ENCODE measurements at regions of chr4 and their contacts with region 1.

Region 1: DNA sequence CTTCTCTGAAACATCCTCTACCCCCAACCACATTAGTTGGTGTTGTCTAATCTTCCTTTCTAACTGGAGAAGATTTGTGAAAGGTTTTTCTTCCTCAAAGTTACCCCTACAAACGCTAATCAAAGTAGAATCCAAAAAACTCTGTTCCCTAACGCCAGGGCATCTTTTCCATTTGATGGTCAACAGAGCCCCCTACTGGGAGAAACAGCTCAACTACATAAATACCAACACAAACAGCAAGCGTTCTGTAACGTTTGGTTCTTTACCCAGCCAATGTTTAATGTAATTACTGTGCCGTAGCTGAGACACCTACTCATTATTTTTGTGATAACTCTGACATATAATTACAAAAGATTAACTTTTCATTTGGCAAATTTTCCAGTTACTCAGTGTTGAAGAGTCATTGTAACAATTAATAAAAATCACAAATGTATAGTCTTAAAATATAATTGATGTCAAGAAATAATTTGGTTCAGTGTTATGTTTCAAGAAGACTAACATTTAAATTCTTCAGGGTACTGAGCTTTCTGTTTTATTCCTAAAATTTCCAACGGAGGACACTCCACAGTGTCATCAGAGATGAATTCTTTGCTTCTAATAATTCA is 94.9 kb upstream of the TBC1D9 start:
- DNase-seq: peak; percentile 69
- H3K4me3 ChIP-seq: no peak overlapping the region
- H3K27ac ChIP-seq: no peak overlapping the region
- H3K4me1 ChIP-seq: no peaks in the 10 kb centered on the region
- H3K27me3 ChIP-seq: peaks cover 2 to 9% of the 10 kb centered on the region in 2 experiments
- CTCF ChIP-seq: peak; percentile 65 to 69
- POLR2A ChIP-seq: no peak

Region 2: DNA sequence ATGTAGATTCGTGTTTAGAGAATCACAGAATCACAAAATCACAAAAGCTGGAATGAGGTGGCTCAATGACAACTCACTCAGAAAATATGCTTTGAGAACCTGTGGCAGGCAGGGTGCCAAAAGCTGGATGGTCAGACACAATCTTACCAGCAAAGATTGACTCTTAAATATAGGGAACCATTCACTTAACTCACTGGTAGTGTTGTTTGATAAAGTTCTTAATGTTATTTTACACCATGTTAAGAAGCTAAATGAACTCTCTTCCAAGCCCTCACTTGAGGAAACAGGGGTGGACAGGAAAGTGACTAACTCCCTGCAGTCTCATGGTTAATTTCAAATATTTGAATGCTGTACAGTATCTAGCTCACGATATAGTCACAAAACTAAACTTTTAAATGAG is 483.4 kb before region 1 on chr4:
- CTCF ChIA-PET with region 1: interaction called, 118 read pairs
- POLR2A ChIA-PET with region 1: no interaction called
- dilution Hi-C with region 1: no loop called
- intact Hi-C with region 1: no loop called
- DNase-seq: peak; percentile 55
- H3K4me3 ChIP-seq: no peak overlapping the region
- H3K27ac ChIP-seq: peak overlapping the region; percentile 30
- H3K4me1 ChIP-seq: peaks cover 11% of the 10 kb centered on the region
- H3K27me3 ChIP-seq: no peaks in the 10 kb centered on the region
- CTCF ChIP-seq: no peak
- POLR2A ChIP-seq: no peak

Region 3: DNA sequence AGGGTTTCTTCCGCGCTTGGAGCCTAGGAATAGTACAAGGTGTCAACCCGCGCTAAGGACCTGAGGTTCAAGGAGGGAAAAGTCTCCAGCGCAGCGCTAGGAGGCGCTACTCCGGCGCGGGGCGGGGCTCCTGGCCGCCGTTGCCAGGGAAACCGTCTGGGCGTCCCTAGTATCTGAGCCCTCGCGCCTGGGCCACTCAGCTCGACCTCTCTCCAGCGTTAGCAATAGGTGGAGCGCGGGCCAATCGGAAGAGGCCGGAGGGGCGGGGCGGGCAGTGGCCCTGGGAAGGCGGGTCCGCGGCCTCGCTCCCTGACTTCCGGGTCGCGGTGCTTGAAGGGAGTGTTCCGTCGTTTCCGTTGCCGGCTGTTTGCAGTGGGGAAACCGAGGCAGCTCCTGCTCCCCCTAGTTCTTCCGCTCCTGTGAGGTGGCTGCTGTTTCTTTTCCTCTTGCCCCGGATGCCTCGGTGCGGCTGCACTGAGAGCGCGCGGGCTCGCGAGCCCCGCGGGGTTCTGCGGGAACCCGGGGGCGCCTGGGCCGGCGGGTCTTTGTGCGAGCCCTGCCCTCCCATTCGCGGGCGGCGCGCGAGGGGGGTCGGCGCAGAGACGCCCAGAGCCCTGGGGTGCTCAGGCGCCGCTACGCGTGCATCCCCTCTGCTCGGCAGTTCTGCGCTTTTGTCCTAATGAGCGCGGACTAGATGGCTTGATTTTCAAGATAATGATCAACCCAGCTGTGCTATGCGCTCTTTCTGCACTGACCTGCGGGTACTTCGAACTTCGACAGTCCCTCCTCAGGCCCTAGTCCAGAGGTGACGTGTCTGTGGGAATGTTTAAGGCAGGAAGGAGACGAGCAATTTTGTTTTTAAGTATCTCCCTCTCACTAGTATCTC is 327.0 kb before region 1 on chr4 and contains the start of gene ELMOD2:
- CTCF ChIA-PET with region 1: interaction called, 11 read pairs
- POLR2A ChIA-PET with region 1: no interaction called
- dilution Hi-C with region 1: no loop called
- intact Hi-C with region 1: loop called (anchors 1 kb)
- DNase-seq: peak; percentile 97
- H3K4me3 ChIP-seq: peak within 1 kb of the TSS; percentile 38 to 87 (median 83)
- H3K27ac ChIP-seq: peak within 1 kb of the TSS; percentile 21
- H3K4me1 ChIP-seq: peaks cover 14% of the 10 kb centered on the region
- H3K27me3 ChIP-seq: peaks cover 0 to 2% of the 10 kb centered on the region in 2 experiments
- CTCF ChIP-seq: peak; percentile 97 to 99
- POLR2A ChIP-seq: peak; percentile 80
- total RNA-seq, gene ELMOD2: 20.5 and 23.6 TPM in 2 replicates

Region 4: DNA sequence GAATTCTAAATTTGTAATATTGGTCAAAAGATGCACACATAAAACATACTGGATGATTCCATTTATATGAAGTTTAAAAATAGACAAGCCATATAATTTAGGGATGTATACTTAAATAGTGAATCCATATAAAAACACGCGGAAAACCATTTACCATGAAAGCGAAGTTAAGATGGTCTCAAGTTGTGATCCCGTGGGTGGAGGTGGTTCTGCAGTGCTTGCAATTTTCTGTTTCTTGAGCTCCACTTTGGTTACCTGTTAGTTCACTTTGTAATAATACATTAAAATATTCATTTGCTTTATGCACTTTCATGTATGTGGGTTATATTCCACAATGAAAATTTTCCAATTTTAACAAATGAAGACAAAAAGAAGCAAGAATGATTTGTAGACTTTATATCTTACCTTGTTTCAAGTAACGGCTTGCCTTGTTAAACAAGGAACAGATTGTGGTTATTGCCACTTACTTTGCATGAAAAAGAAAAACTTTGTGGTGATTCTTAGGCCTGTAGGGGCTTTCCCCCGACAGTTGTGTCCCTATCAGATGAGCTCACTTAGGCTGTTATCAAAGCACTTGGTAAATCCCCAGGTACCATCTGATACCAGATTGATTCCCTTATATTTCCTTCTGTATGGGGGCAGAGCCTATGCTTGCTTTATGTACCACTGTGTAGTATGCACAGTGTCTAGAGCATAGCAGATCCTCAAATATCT is 294.6 kb before region 1 on chr4:
- CTCF ChIA-PET with region 1: no interaction called
- POLR2A ChIA-PET with region 1: no interaction called
- dilution Hi-C with region 1: no loop called
- intact Hi-C with region 1: no loop called
- DNase-seq: no peak
- H3K4me3 ChIP-seq: no peak overlapping the region
- H3K27ac ChIP-seq: no peak overlapping the region
- H3K4me1 ChIP-seq: no peaks in the 10 kb centered on the region
- H3K27me3 ChIP-seq: peaks cover 4 to 5% of the 10 kb centered on the region in 2 experiments
- CTCF ChIP-seq: no peak
- POLR2A ChIP-seq: no peak

Region 5: DNA sequence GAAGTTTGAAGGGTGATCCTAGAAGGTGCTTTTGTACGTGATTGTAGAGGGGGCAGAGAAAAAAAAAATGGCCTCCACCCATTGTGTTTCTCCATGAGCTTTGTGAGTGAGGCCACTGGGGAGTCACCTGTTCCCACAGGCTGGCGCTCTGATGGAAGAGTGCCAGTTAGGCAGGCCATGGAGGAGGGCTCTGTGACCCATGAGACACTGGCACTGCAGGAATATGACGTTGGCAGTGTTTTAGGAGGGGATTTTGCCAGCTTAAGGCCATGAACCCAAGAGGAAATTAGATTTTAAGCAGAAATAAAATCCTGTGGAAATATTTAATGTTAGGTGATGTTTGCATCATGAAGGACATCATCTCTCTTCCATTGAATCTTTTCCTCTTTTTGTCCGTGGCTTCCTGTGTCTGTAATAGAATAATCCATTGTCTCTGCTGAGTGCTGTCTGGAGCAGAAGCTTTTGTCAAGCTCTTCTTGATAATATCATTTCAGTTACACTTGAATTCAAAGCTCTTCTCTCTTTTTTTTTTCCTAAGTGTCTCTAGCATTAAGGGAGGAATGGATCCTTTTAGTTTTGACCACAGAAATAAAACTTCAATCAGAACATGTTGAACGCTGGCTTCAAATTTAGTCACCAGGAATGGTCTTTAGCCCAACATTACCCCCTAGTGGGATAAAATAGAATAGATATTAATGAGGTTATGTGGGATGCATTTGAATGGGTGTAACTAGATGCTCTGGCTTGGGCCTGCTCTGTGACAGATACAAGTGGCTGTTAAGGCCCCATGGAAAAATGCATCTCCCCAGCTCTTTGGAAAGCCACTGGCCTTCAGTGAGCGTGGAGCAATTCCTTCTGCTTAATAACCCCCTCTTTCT is 241.3 kb before region 1 on chr4:
- CTCF ChIA-PET with region 1: interaction called, 22 read pairs
- POLR2A ChIA-PET with region 1: no interaction called
- dilution Hi-C with region 1: no loop called
- intact Hi-C with region 1: loop called (anchors 1 kb)
- DNase-seq: peak; percentile 75
- H3K4me3 ChIP-seq: no peak overlapping the region
- H3K27ac ChIP-seq: no peak overlapping the region
- H3K4me1 ChIP-seq: peaks cover 3% of the 10 kb centered on the region
- H3K27me3 ChIP-seq: peaks cover 0 to 11% of the 10 kb centered on the region in 2 experiments
- CTCF ChIP-seq: peak; percentile 20 to 36
- POLR2A ChIP-seq: no peak

Region 6: DNA sequence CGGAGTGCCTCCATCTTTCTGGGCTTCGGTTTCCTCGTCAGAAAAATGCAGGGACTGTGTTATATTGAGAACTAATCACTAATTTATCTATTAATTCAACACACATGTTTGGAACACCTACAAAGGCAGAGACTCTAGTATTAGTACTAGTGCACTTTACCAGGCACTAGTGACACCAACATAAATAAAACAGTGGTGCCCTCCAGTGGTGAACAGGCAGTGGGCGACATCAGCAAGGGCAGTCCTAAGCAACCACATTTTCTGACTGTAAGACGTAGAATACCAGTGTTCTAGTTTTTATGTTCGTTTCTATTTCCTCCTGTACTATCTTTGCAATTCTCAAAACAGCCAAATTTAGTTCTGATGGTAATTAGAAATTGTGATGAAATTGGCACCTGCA is 213.3 kb before region 1 on chr4:
- CTCF ChIA-PET with region 1: interaction called, 8 read pairs
- POLR2A ChIA-PET with region 1: no interaction called
- dilution Hi-C with region 1: no loop called
- intact Hi-C with region 1: loop called (anchors 1 kb)
- DNase-seq: peak; percentile 21
- H3K4me3 ChIP-seq: no peak overlapping the region
- H3K27ac ChIP-seq: no peak overlapping the region
- H3K4me1 ChIP-seq: no peaks in the 10 kb centered on the region
- H3K27me3 ChIP-seq: no peaks in the 10 kb centered on the region
- CTCF ChIP-seq: peak; percentile 41 to 50
- POLR2A ChIP-seq: no peak

Region 7: DNA sequence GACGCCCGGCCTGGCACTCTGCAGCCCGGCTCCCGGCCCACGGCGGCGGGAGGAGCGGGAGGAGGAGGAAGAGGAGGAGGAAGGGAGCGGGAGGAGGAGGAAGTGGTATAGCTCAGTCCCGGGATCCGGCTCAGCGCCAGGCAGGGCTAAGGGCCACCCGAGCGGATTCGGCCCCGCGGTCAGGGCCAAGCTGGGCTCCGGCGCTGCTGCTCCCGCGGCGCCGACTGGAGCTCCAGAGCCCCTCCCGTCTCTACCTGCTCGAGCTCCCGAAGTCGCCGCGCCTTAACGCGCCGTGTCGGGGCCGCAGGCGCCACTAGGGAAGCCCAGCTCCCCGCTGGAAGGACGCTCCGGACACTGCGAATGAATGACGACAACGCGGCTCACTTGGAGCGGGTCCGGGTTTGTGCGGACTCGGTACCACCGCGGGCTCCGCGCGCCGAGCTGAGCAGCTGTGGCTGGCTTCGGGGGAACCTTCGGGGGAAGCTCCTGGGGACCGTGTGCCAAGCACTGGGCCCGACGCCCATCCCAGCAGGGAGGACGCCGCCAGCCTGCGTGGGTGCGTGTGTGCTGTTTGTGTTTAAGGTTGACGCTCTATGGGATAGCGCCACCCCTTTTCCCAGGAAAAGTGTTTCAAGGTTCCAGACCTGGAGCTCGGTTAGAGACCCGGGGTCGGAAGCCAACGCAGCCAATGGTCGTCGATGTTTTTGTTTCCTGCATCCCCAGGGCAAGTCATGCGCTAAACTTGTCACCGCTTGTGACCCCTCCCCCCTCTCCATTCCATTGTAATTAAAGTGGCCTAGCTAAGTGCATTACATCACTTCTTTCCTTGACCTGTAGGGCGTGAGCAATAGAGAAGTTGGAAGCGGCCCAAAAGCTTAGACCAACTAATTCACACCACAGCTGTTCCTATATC is 94.6 kb before region 1 on chr4 and contains the start of gene TBC1D9:
- CTCF ChIA-PET with region 1: interaction called, 5 read pairs
- POLR2A ChIA-PET with region 1: no interaction called
- dilution Hi-C with region 1: no loop called
- intact Hi-C with region 1: loop called (anchors 1 kb)
- DNase-seq: peak; percentile 97
- H3K4me3 ChIP-seq: peak within 1 kb of the TSS; percentile 69 to 89 (median 79)
- H3K27ac ChIP-seq: peak within 1 kb of the TSS; percentile 98
- H3K4me1 ChIP-seq: peaks cover 14% of the 10 kb centered on the region
- H3K27me3 ChIP-seq: no peaks in the 10 kb centered on the region
- CTCF ChIP-seq: peak; percentile 4 to 9
- POLR2A ChIP-seq: peak; percentile 72
- total RNA-seq, gene TBC1D9: 43.4 and 45.3 TPM in 2 replicates

Measured in endothelial cell of umbilical vein (primary cell).